Activated CD8-positive, alpha-beta T cell treated with anti-CD3 and anti-CD28 coated beads for 36 hours (primary cell): ENCODE measurements at regions of chr9 and their contacts with region 1.

Region 1: DNA sequence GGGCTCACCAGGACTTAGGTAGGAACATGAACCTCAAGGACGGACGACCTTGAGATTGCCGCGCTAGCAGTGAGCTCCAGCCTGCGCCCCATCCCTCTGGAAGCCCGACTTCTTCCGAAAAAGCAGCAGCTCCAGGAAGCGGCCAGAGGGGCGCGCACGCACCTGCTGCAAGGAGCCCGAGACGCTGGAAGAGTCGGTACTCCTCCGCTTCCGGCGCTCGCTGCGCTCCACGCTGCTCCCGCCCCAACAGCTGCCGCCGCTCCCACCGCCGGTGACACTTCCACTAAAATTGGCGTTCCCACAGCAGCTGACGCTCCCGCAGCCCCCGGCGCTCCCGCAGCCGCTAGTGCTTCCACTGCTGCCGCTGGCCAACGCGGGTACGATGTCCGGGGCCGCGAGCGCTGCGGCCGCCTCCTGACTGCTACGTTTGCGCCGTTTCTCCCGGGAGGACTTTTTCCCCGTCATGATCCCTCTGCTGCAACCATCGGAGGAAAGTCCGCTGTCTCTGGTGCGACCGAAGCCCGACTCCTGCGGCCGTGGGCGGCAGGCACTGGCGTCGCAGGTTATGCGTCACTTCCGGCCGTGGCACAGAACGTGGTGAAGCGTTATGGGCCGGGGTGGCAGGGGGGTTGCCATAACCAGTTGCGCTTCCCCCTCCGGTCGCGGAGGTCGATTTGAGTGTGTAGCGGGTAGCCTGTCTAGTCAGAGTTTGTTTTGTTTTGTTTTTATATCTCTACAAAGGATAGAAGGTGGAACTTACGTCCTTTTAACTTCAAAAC is at the start of gene CAAP1:
- DNase-seq: peak; percentile 97
- ATAC-seq: peak; percentile 94
- H3K4me3 Mint-ChIP-seq: peak within 1 kb of the TSS; percentile 90
- H3K27ac Mint-ChIP-seq: peak within 1 kb of the TSS; percentile 99
- H3K4me1 Mint-ChIP-seq: peaks cover 27% of the 10 kb centered on the region
- H3K27me3 Mint-ChIP-seq: no peaks in the 10 kb centered on the region
- CTCF ChIP-seq: peak; percentile 38
- total RNA-seq, gene CAAP1: 16.8 to 19.0 TPM

Region 2: GRCh38 chr9:26946753-26947727 is 54.6 kb after region 1 on chr9 and contains the start of gene PLAA:
- CTCF ChIA-PET with region 1: interaction called, 5 read pairs
- POLR2A ChIA-PET with region 1: interaction called, 15 read pairs
- intact Hi-C with region 1: no loop called
- DNase-seq: peak; percentile 90
- ATAC-seq: peak; percentile 98
- H3K4me3 Mint-ChIP-seq: peak within 1 kb of the TSS; percentile 76
- H3K27ac Mint-ChIP-seq: peak within 1 kb of the TSS; percentile 99
- H3K4me1 Mint-ChIP-seq: peaks cover 36% of the 10 kb centered on the region
- H3K27me3 Mint-ChIP-seq: peaks cover 4% of the 10 kb centered on the region
- CTCF ChIP-seq: no peak
- total RNA-seq, gene PLAA: 29.8 to 31.9 TPM

Region 3: GRCh38 chr9:26955921-26956859 is 63.8 kb after region 1 on chr9 and contains the start of gene IFT74:
- CTCF ChIA-PET with region 1: interaction called, 4 read pairs
- POLR2A ChIA-PET with region 1: interaction called, 9 read pairs
- intact Hi-C with region 1: loop called (anchors 5 kb)
- DNase-seq: peak; percentile 97
- ATAC-seq: peak; percentile 98
- H3K4me3 Mint-ChIP-seq: peak within 1 kb of the TSS; percentile 82
- H3K27ac Mint-ChIP-seq: peak within 1 kb of the TSS; percentile 81
- H3K4me1 Mint-ChIP-seq: peaks cover 26% of the 10 kb centered on the region
- H3K27me3 Mint-ChIP-seq: no peaks in the 10 kb centered on the region
- CTCF ChIP-seq: no peak
- total RNA-seq, gene IFT74: 9.1 to 9.2 TPM